Mammary epithelial cell (primary cell): ENCODE measurements at regions of chr14 and their contacts with region 1.

Region 1: GRCh38 chr14:46581036-46581671 is 70.4 kb downstream of the RPL10L start:
- DNase-seq: peak; percentile 6
- H3K4me3 ChIP-seq: no peak overlapping the region
- H3K27ac ChIP-seq: no peak overlapping the region
- H3K4me1 ChIP-seq: no peaks in the 10 kb centered on the region
- H3K27me3 ChIP-seq: no peaks in the 10 kb centered on the region
- CTCF ChIP-seq: peak; percentile 43 to 46

Region 2: DNA sequence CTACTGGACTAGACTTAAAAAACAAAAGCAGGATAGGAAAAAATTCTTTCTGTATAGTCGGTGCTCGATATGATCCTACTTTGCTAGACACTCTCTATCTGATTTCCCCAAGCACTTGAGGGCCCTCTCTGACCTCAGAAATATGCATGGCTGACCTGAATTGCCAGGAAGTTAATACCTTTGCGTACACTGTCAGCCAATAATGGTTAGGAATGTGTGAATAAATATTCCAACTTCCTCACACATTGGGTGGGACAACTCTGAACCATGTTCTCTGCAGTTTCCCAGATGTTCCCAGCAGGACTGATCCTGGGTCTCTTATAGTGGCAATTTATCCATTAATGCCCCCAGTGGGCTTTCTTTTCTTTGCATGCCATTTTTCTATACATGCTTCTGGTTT is 91.0 kb after region 1 on chr14:
- CTCF ChIA-PET with region 1: no interaction called
- dilution Hi-C with region 1: no loop called
- in situ Hi-C with region 1: no loop called
- intact Hi-C with region 1: no loop called
- DNase-seq: no peak
- H3K4me3 ChIP-seq: no peak overlapping the region
- H3K27ac ChIP-seq: no peak overlapping the region
- H3K4me1 ChIP-seq: no peaks in the 10 kb centered on the region
- H3K27me3 ChIP-seq: no peaks in the 10 kb centered on the region
- CTCF ChIP-seq: no peak

Region 3: DNA sequence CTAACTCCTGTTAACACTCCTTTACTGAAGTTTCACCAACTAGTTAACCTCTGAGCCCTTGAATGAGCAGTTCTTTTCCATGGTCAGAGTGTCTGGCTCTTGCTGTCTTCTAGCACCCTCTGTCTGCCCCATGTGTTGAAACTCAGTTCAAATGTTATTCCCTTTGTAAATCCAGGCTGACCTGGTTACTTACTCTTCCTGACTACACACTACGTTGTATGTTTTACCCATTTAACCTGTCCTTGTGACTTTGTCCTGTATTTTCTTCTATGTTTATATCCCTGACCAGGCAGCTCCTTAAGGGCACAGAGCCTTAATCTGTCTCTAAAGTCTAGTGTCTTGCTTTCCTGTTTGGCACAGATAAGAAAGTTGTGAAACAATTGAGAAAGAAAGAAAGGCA is 459.4 kb after region 1 on chr14:
- CTCF ChIA-PET with region 1: interaction called, 3 read pairs
- dilution Hi-C with region 1: no loop called
- in situ Hi-C with region 1: loop called in 1 of 2 experiments (anchors 10 kb)
- intact Hi-C with region 1: loop called (anchors 1 kb)
- DNase-seq: peak; percentile 38
- H3K4me3 ChIP-seq: no peak overlapping the region
- H3K27ac ChIP-seq: no peak overlapping the region
- H3K4me1 ChIP-seq: no peaks in the 10 kb centered on the region
- H3K27me3 ChIP-seq: no peaks in the 10 kb centered on the region
- CTCF ChIP-seq: peak in 1 of 2 donors; percentile 44